Naive thymus-derived CD8-positive, alpha-beta T cell (primary cell): ENCODE measurements at regions of chr5 and their contacts with region 1.

Region 1: GRCh38 chr5:180718810-180719453 is 20.9 kb downstream of the OR2Y1 start:
- DNase-seq: peak in 9 of 10 donors; percentile 5 to 70 (median 55)
- ATAC-seq: peak in 1 of 2 donors; percentile 53
- H3K4me3 Mint-ChIP-seq: peak overlapping the region in 1 of 10 donors; percentile 37
- H3K27ac Mint-ChIP-seq: peak overlapping the region in 6 of 10 donors; percentile 3 to 78 (median 56)
- H3K4me1 Mint-ChIP-seq: peaks cover 5 to 21% (median 19%) of the 10 kb centered on the region in 4 donors
- H3K27me3 Mint-ChIP-seq: peaks cover 0 to 9% (median 0%) of the 10 kb centered on the region in 5 donors

Region 2: DNA sequence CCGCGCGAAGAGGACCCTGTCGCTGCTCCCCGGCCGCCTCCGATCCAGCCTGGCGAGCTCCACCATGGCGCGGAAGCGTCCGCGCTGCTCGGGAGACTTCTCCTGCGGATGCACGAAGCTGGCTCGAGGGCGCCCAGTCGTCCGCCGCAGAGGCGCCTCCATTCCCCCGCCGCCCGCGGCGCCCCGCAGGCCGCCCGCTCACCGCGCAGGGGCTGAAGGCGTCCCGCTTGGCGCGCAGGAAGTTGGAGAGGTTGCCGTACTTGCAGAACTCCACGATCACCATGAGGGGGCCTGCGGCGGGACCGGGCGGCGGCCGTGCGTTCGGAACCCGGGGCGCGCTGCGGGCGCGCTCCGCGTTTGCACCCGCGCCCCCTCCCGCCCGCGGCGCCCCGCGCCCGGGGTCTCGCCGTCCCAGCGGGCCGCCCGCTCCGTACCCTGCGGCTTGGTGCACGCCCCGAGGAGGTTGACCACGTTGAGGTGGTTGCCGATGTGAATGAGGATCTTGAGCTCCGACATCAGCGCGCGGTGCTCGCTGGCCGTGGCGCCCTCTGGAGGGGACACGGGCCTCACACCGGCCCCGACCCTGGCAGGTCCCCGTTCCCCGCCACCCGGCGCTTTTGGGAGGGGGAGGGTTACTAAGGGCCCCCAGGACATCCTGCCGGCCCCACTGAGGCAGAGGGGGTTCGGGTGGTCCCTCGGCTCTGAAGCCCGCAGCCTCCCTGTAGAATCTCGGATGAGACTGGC is 99.9 kb before region 1 on chr5:
- POLR2A ChIA-PET with region 1: no interaction called
- DNase-seq: peak in 8 of 10 donors; percentile 12 to 42 (median 36)
- ATAC-seq: peak; percentile 84 to 89
- H3K4me3 Mint-ChIP-seq: peak overlapping the region in 7 of 10 donors; percentile 19 to 61 (median 50)
- H3K27ac Mint-ChIP-seq: peak overlapping the region in 1 of 10 donors; percentile 56
- H3K4me1 Mint-ChIP-seq: peaks cover 14 to 19% (median 17%) of the 10 kb centered on the region in 4 donors
- H3K27me3 Mint-ChIP-seq: peaks cover 0 to 3% (median 0%) of the 10 kb centered on the region in 5 donors

Region 3: DNA sequence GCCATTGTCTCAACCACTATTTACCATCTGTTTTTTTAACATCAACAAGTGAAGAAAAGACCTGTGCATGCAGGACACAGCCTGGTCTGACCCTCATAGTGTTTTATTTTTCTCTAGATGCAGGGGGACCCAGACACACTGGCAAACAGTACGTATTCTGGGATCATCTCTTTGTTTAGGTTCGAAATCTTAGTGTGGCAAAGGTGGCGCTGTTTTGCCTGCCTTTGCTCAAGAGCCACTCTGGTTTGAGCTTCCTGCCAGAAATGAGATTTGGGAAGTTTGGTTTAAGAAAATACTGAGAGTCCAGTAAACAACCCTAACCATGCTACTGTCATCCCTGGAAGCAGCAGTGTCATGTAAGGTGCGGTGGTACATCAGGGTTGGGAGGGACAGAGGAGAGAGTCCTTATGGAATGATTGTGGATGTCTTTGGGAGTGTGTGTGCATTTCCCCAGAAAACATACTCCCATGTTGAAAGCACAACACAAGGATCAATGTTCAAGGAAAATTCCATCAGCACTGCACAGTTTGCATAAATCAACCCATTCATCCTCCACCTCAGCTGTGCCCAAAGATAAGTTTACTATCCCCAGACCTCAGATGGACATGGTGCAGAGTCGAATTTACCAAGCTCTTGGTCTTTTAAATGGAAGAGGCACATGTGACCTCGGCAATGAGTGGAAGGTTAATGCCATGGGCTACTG is 35.6 kb before region 1 on chr5:
- POLR2A ChIA-PET with region 1: interaction called, 29 read pairs
- DNase-seq: peak in 1 of 10 donors; percentile 16
- ATAC-seq: no peak
- H3K4me3 Mint-ChIP-seq: peak overlapping the region in 8 of 10 donors; percentile 28 to 67 (median 62)
- H3K27ac Mint-ChIP-seq: peak overlapping the region; percentile 5 to 97 (median 88)
- H3K4me1 Mint-ChIP-seq: peaks cover 21 to 49% (median 46%) of the 10 kb centered on the region in 4 donors
- H3K27me3 Mint-ChIP-seq: no peaks in the 10 kb centered on the region

Region 4: DNA sequence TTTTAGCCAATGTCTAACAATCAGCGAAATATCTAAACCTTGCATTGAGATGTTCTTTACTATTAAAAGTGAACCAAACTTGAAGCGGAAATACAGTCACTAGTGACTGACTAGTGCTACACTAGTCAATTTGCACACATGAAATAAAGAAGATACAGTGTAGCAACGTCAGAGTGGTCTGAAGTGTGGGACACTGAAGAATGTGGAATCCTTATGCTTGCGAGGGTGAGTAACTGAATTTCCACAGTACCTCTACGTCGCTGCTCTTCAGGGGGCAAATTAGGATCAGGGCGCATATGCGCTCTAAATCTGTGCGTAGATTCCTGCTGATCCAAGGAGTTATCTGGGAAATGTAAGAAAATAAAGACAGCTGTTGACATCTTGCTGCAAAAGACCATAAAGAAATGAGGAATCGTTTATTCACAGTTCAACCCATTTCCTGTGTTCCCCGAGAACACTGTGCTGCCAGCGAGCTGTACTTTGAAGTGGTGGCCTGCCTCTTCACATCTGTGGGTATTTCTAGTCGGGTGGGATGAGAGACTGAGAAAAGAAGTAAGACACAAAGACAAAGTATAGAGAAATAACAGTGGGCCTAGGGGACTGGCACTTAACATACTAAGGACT is 29.7 kb before region 1 on chr5:
- POLR2A ChIA-PET with region 1: interaction called, 29 read pairs
- DNase-seq: peak; percentile 29 to 83 (median 68)
- ATAC-seq: peak; percentile 83 to 86
- H3K4me3 Mint-ChIP-seq: peak overlapping the region; percentile 75 to 86 (median 80)
- H3K27ac Mint-ChIP-seq: peak overlapping the region; percentile 76 to 100 (median 94)
- H3K4me1 Mint-ChIP-seq: peaks cover 42 to 83% (median 80%) of the 10 kb centered on the region in 4 donors
- H3K27me3 Mint-ChIP-seq: no peaks in the 10 kb centered on the region